ENCODE measurements at regions of chr15 and their contacts with region 1.

Region 1: DNA sequence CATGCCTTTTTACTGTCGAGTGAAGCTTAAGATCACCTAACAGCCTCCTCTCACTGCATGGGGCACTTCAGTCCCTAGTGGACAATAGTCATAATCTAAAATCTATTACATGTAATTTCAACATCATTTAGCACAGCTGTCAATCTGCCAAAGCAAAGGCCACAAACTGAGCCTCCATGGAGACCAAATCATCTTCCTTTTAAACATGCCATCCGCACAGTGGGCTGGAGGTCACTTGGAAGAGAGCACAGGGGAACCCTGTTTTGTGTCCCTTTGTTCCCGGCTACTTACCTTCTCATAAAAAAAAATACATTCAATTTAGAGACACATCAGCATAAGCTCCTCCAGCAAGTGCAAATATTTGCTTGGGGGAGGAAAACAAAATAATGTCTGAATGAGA is 167.3 kb downstream of the SQOR start:
- DNase-seq: no peak
- CTCF ChIP-seq: no peak

Region 2: GRCh38 chr15:45346381-45346780 is 455.8 kb before region 1 on chr15:
- CTCF ChIA-PET with region 1: no interaction called
- POLR2A ChIA-PET with region 1: no interaction called
- DNase-seq: no peak
- CTCF ChIP-seq: no peak

Region 3: DNA sequence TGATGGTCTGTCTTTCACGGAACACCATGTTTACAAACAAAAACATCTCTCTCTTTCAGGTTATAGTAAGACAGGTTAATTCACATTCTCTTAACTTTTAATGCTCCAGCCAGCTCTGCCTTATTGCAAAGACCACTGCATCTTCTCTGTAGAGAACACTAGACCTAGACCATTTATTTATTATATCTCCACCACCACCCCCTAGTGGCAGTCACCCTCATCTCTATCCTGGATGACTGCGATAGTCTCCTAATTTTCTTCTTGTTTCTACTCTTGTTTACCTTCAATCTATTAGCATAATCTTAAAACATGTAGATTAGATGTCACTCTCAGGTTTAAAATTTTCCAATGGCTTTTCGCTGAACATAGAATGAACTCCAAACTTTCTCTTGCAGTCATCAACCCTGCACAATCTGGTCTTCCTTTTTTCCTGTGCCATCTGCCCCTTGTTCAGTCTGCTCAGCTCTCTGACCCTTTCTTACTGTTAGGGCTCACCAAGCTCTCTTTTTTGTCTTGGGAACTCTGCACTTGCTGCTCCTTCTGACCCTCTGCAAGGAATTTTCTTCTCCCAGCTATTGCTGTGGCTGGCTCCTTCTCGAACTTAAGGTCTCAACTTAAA is 11.7 kb before region 1 on chr15:
- CTCF ChIA-PET with region 1: interaction called, 10 read pairs
- POLR2A ChIA-PET with region 1: no interaction called
- DNase-seq: peak; percentile 27
- CTCF ChIP-seq: peak; percentile 44